ENCODE measurements at regions of chr18 and their contacts with region 1.

Region 1: GRCh38 chr18:36067055-36067957 is at the start of gene RPRD1A:
- DNase-seq: peak; percentile 97
- H3K4me3 ChIP-seq: peak within 1 kb of the TSS; percentile 60 to 92 (median 83)
- H3K27ac ChIP-seq: peak within 1 kb of the TSS; percentile 71
- H3K4me1 ChIP-seq: peaks cover 15% of the 10 kb centered on the region
- H3K27me3 ChIP-seq: no peaks in the 10 kb centered on the region
- CTCF ChIP-seq: no peak
- POLR2A ChIP-seq: peak; percentile 36
- total RNA-seq, gene RPRD1A: 47.4 and 50.7 TPM in 2 replicates

Region 2: GRCh38 chr18:35376742-35377695 is 690.3 kb before region 1 on chr18 and contains the start of gene ZNF396:
- CTCF ChIA-PET with region 1: no interaction called
- POLR2A ChIA-PET with region 1: no interaction called
- dilution Hi-C with region 1: no loop called
- intact Hi-C with region 1: no loop called
- DNase-seq: peak; percentile 41
- H3K4me3 ChIP-seq: peak within 1 kb of the TSS; percentile 60 to 70 (median 62)
- H3K27ac ChIP-seq: no peak within 1 kb of the TSS
- H3K4me1 ChIP-seq: peaks cover 7% of the 10 kb centered on the region
- H3K27me3 ChIP-seq: peaks cover 5% of the 10 kb centered on the region in 2 experiments
- CTCF ChIP-seq: no peak
- POLR2A ChIP-seq: no peak
- total RNA-seq, gene ZNF396: 0.44 and 0.72 TPM in 2 replicates

Region 3: GRCh38 chr18:36035253-36035652 is 32.1 kb before region 1 on chr18:
- CTCF ChIA-PET with region 1: no interaction called
- POLR2A ChIA-PET with region 1: no interaction called
- dilution Hi-C with region 1: no loop called
- intact Hi-C with region 1: loop called (anchors 1 kb)
- DNase-seq: peak; percentile 94
- H3K4me3 ChIP-seq: no peak overlapping the region
- H3K27ac ChIP-seq: no peak overlapping the region
- H3K4me1 ChIP-seq: peaks cover 22% of the 10 kb centered on the region
- H3K27me3 ChIP-seq: no peaks in the 10 kb centered on the region
- CTCF ChIP-seq: no peak
- POLR2A ChIP-seq: peak; percentile 71

Region 4: GRCh38 chr18:36051760-36052159 is 15.5 kb before region 1 on chr18:
- CTCF ChIA-PET with region 1: interaction called, 4 read pairs
- POLR2A ChIA-PET with region 1: no interaction called
- dilution Hi-C with region 1: no loop called
- intact Hi-C with region 1: loop called (anchors 2 kb)
- DNase-seq: no peak
- H3K4me3 ChIP-seq: no peak overlapping the region
- H3K27ac ChIP-seq: no peak overlapping the region
- H3K4me1 ChIP-seq: no peaks in the 10 kb centered on the region
- H3K27me3 ChIP-seq: no peaks in the 10 kb centered on the region
- CTCF ChIP-seq: no peak
- POLR2A ChIP-seq: no peak

Region 5: GRCh38 chr18:36186911-36187834 is 119.9 kb after region 1 on chr18 and contains the start of gene MOCOS:
- CTCF ChIA-PET with region 1: no interaction called
- POLR2A ChIA-PET with region 1: no interaction called
- dilution Hi-C with region 1: no loop called
- intact Hi-C with region 1: loop called (anchors 5 kb)
- DNase-seq: peak; percentile 39
- H3K4me3 ChIP-seq: peak within 1 kb of the TSS; percentile 49 to 79 (median 59)
- H3K27ac ChIP-seq: no peak within 1 kb of the TSS
- H3K4me1 ChIP-seq: peaks cover 4% of the 10 kb centered on the region
- H3K27me3 ChIP-seq: peaks cover 0 to 8% of the 10 kb centered on the region in 2 experiments
- CTCF ChIP-seq: no peak
- POLR2A ChIP-seq: no peak
- total RNA-seq, gene MOCOS: 0.85 and 0.88 TPM in 2 replicates

Region 6: GRCh38 chr18:36229188-36229587 is 161.9 kb after region 1 on chr18:
- CTCF ChIA-PET with region 1: no interaction called
- POLR2A ChIA-PET with region 1: no interaction called
- dilution Hi-C with region 1: no loop called
- intact Hi-C with region 1: no loop called
- DNase-seq: no peak
- H3K4me3 ChIP-seq: no peak overlapping the region
- H3K27ac ChIP-seq: no peak overlapping the region
- H3K4me1 ChIP-seq: no peaks in the 10 kb centered on the region
- H3K27me3 ChIP-seq: no peaks in the 10 kb centered on the region
- CTCF ChIP-seq: no peak
- POLR2A ChIP-seq: no peak

Measured in endothelial cell of umbilical vein (primary cell).